ENCODE measurements at regions of chr15 and their contacts with region 1.

Region 1: DNA sequence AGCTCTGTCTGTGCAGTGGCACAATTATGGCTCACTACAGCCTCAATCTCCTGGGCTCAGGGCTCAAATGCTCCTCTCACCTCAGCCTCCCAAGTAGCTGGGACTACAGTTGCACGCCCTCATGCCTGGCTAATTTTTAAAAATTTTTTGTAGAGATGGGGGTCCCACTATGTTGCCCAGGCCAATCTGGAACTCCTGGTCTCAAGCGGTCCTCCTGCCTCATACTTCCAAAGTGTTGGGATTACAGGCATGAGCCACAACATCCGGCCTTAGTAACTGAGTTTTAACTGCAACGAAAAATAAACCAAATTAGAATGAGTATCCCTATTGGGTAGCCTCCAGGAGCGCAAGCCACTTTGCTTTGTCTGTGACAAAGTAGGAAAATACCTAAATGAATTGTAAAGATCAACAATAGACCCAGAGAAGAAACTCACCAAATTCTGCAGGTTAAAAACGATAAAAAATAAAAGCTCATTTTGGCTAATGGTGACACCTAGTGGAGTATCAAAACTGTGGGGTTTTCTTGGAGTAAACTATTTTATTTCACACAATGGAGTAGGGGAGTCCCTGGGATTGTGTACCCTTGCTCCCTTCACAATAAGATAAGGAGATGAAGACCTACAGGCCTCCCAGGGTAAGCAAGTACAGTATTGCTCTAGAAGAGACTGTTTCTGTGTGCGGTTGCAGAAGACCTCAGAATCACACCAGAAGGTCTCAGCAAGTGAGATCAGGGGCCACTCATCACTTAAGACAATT is 21.0 kb upstream of the CA12 start:
- DNase-seq: no peak
- H3K4me3 ChIP-seq: no peak overlapping the region
- H3K27ac ChIP-seq: peak overlapping the region; percentile 16 to 62
- H3K4me1 ChIP-seq: no peaks in the 10 kb centered on the region
- H3K27me3 ChIP-seq: no peaks in the 10 kb centered on the region
- CTCF ChIP-seq: peak; percentile 40 to 78 (median 62)
- POLR2A ChIP-seq: no peak

Region 2: GRCh38 chr15:63288778-63289378 is 113.8 kb before region 1 on chr15:
- intact Hi-C with region 1: loop called (anchors 1 kb)
- DNase-seq: no peak
- H3K4me3 ChIP-seq: no peak overlapping the region
- H3K27ac ChIP-seq: no peak overlapping the region
- H3K4me1 ChIP-seq: no peaks in the 10 kb centered on the region
- H3K27me3 ChIP-seq: no peaks in the 10 kb centered on the region
- CTCF ChIP-seq: peak in 3 of 4 experiments; percentile 53 to 77 (median 76)
- POLR2A ChIP-seq: no peak

Region 3: GRCh38 chr15:63473999-63474809 is 71.5 kb after region 1 on chr15:
- intact Hi-C with region 1: no loop called
- DNase-seq: peak; percentile 86
- H3K4me3 ChIP-seq: no peak overlapping the region
- H3K27ac ChIP-seq: peak overlapping the region; percentile 81 to 95
- H3K4me1 ChIP-seq: peaks cover 13% of the 10 kb centered on the region
- H3K27me3 ChIP-seq: no peaks in the 10 kb centered on the region
- CTCF ChIP-seq: no peak
- POLR2A ChIP-seq: no peak